Gastrocnemius medialis (tissue), 4 donors: ENCODE measurements at regions of chr2 and their contacts with region 1.

Region 1: DNA sequence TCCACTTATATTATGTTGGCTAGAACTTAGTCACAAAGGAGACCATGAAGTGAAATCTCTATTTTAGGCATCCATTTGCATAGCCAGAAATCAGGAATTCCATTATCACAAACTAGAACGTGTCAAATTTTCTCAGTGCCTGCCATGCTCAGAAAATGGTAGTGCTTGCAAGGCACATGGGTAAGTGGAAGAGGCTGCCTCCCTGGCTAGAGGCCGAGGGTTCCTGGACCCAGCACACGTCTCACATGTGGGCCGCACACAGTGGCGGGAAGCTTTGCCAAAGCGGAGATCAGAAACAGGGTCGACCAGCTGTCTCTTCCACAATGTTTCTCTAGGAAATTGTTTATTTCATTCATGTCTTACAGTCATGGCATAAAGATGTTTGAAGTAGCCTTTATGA is 42.3 kb downstream of the TRAF3IP1 start:
- DNase-seq: no peak
- ATAC-seq: no peak
- H3K4me3 ChIP-seq: no peak overlapping the region
- H3K27ac ChIP-seq: no peak overlapping the region
- H3K4me1 ChIP-seq: peaks cover 0 to 3% of the 10 kb centered on the region in 2 donors
- H3K27me3 ChIP-seq: no peaks in the 10 kb centered on the region
- CTCF ChIP-seq: no peak
- POLR2A ChIP-seq: no peak

Region 2: DNA sequence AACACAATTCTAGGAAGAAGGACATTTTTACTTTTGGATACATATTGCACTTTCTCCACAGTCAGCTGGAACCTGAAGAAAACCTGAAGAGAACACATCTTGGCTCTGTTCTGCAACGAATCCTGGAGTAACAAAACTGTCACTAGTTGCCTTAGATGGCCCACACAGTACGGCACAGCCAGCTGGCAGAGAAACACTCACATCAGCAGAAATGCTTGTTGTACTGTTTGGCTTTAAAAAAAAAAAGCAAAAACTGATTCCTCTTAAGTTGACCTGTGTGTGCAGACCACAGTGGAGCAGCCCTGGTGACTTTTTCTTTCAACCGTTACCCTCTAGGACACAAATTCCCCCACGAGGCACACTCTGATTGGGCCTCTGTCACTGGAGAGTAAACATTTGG is 332.9 kb after region 1 on chr2:
- in situ Hi-C with region 1: no loop called
- intact Hi-C with region 1: no loop called
- DNase-seq: no peak
- ATAC-seq: no peak
- H3K4me3 ChIP-seq: no peak overlapping the region
- H3K27ac ChIP-seq: no peak overlapping the region
- H3K4me1 ChIP-seq: no peaks in the 10 kb centered on the region
- H3K27me3 ChIP-seq: peaks cover 0 to 8% (median 0%) of the 10 kb centered on the region in 3 donors
- CTCF ChIP-seq: no peak
- POLR2A ChIP-seq: no peak

Region 3: GRCh38 chr2:238784671-238785527 is 422.3 kb after region 1 on chr2:
- in situ Hi-C with region 1: loop called (anchors 10 to 25 kb)
- intact Hi-C with region 1: loop called (anchors 1 kb)
- DNase-seq: peak; percentile 47 to 65
- ATAC-seq: peak; percentile 71 to 87
- H3K4me3 ChIP-seq: no peak overlapping the region
- H3K27ac ChIP-seq: peak overlapping the region in 2 of 4 donors; percentile 13 to 48
- H3K4me1 ChIP-seq: peaks cover 7 to 10% of the 10 kb centered on the region in 2 donors
- H3K27me3 ChIP-seq: peaks cover 0 to under 1% (median 0%) of the 10 kb centered on the region in 3 donors
- CTCF ChIP-seq: peak; percentile 62 to 86 (median 81)
- POLR2A ChIP-seq: no peak